ENCODE measurements at regions of chr14 and their contacts with region 1.

Region 1: GRCh38 chr14:24271134-24271833 is at the start of gene RABGGTA:
- DNase-seq: peak; percentile 87 to 98 (median 94)
- ATAC-seq: peak; percentile 86 to 91
- H3K4me3 Mint-ChIP-seq: peak within 1 kb of the TSS; percentile 78 to 94 (median 92)
- H3K27ac Mint-ChIP-seq: peak within 1 kb of the TSS; percentile 92 to 100 (median 99)
- H3K4me1 Mint-ChIP-seq: peaks cover 31 to 45% (median 41%) of the 10 kb centered on the region in 4 donors
- H3K27me3 Mint-ChIP-seq: no peaks in the 10 kb centered on the region
- polyA plus RNA-seq, gene RABGGTA: 12.7 to 22.1 (median 20.4) TPM

Region 2: DNA sequence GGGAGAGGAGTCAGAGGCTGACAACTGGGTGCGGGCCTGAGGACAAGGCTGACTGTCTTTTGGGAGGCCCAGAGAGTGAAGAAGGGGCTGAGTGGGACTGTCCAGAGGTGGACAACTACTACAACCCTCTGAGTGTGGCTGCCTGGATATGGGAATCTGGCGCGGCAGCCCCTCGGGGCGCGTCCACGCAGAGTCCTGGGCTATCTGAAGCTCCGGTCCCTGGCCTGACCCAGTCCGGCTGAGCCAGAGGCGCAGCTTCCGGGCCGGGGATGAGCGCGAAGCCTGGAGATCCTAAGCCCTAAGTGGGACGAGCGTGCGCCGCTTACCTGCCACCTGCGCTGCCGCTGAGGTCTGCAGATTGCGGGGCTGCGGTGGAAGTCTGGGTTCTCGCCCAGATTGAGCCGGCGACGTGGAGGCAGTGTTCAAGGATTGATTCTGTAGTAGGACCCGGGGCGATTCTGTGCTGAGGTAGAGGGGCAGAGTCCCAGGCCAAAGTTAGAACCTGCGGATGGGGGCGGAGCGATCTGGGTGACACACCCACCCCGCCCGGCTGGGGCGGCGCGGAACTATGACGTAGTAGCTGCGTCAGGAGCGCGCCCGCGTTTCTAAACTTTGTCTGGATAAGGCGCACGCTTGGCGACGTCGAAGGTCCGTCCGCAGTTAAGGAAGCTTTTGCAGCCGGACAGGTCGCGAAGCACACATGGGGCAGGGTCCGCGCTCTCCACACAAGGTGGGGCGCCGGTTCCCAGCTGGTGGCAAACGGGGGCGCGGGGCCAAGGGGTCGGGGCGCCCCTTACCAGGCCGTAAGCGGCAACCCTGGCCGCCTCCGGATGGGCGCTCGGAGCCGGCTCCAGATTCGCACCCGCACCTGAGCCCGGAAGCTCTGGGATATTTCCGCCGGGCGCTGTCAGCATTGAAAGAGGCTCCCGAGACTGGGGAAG is 28.2 kb after region 1 on chr14 and contains the starts of genes DHRS1 and NOP9:
- POLR2A ChIA-PET with region 1: interaction called, 44 read pairs
- DNase-seq: peak; percentile 85 to 96 (median 92)
- ATAC-seq: peak; percentile 79 to 89
- H3K4me3 Mint-ChIP-seq: peak within 1 kb of the TSS; percentile 90 to 99 (median 94)
- H3K27ac Mint-ChIP-seq: peak within 1 kb of the TSS; percentile 94 to 98 (median 97)
- H3K4me1 Mint-ChIP-seq: peaks cover 29 to 55% (median 51%) of the 10 kb centered on the region in 4 donors
- H3K27me3 Mint-ChIP-seq: no peaks in the 10 kb centered on the region
- polyA plus RNA-seq, gene DHRS1: 19.6 to 22.4 (median 20.8) TPM
- polyA plus RNA-seq, gene NOP9: 1.3 to 2.2 (median 1.6) TPM

Region 3: DNA sequence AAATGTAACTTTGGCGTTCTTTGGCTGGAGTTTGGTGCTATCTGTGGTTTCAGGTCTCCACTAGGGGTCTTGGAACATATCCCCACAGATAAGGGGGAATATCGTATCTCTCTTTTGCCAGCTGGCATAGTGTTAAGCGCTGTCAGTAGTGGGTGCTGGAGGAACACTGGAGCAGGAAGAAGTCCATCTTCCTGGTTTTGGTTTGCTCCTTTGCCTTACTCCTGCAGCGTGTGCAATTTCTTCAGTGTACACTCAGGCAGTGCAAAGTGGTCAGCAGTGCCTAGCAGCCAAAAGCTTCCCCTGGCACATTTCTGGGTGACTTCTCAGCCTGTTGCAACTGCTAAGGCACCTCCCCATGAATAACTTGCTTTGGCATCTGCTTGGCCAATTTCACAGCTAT is 80.2 kb after region 1 on chr14:
- POLR2A ChIA-PET with region 1: no interaction called
- DNase-seq: no peak
- ATAC-seq: no peak
- H3K4me3 Mint-ChIP-seq: no peak overlapping the region
- H3K27ac Mint-ChIP-seq: no peak overlapping the region
- H3K4me1 Mint-ChIP-seq: no peaks in the 10 kb centered on the region
- H3K27me3 Mint-ChIP-seq: peaks cover 27 to 57% (median 47%) of the 10 kb centered on the region in 5 donors